Activated B cell treated with CpG ODN at 0.5 μM for 24 hours (primary cell): ENCODE measurements at regions of chr3 and their contacts with region 1.

Region 1: DNA sequence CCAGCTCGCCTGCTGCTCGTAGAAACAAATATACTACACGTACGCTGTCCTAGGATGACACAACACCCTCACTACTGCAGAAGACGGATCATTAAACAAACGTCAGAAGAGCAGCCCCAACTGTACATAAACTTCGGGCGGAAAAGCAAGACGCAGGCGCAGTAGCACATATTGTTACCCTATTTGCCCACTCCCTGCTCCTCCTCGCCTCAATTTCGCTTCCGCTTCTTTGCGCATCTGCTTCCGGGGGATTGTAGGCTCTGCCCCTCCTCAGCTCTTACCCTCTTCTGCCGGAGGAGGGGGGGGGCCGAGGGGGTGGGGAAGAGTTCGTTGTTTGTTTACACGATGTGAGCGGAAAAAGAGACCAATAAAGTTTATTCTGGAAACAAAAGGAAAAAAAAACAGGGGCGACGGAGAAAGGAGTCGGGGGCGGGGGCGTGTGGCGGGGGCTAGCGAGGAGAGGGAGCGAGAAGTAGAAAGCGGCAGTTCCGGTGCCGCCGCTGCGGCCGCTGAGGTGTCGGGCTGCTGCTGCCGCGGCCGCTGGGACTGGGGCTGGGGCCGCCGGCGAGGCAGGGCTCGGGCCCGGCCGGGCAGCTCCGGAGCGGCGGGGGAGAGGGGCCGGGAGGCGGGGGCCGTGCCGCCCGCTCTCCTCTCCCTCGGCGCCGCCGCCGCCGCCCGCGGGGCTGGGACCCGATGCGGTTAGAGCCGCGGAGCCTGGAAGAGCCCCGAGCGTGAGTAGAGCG is at the start of gene PIK3CA:
- DNase-seq: peak; percentile 78
- ATAC-seq: peak; percentile 74
- H3K4me3 Mint-ChIP-seq: peak within 1 kb of the TSS; percentile 94
- H3K27ac Mint-ChIP-seq: peak within 1 kb of the TSS; percentile 95
- H3K4me1 Mint-ChIP-seq: peaks cover 37% of the 10 kb centered on the region
- H3K27me3 Mint-ChIP-seq: no peaks in the 10 kb centered on the region
- CTCF ChIP-seq: no peak
- total RNA-seq, gene PIK3CA: 32.6 and 40.5 TPM in 2 replicates

Region 2: GRCh38 chr3:179015551-179016020 is 132.5 kb before region 1 on chr3:
- CTCF ChIA-PET with region 1: interaction called, 12 read pairs
- POLR2A ChIA-PET with region 1: interaction called, 4 read pairs
- intact Hi-C with region 1: loop called (anchors 1 kb)
- DNase-seq: no peak
- ATAC-seq: peak; percentile 74
- H3K4me3 Mint-ChIP-seq: peak overlapping the region; percentile 15
- H3K27ac Mint-ChIP-seq: peak overlapping the region; percentile 57
- H3K4me1 Mint-ChIP-seq: peaks cover 59% of the 10 kb centered on the region
- H3K27me3 Mint-ChIP-seq: no peaks in the 10 kb centered on the region
- CTCF ChIP-seq: peak; percentile 88

Region 3: DNA sequence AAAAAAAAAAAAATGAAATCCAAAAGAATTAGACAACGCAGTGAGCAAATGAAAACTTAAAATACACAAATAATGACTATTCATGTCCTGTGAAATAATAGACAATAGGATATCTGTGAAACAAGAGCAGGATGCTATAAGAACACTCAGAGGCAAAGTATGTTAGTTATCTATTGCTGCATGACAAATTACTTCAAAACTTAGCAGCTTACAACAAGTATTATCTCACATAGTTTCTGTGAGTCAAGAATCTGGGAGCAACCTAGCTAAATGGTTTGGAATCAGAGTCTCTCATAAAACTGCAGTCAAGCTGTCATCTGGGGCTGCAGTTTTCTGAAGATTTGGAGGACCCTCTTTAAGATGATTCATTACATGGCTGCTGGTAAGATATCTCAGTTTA is 40.0 kb before region 1 on chr3:
- CTCF ChIA-PET with region 1: interaction called, 3 read pairs
- POLR2A ChIA-PET with region 1: interaction called, 3 read pairs
- intact Hi-C with region 1: loop called (anchors 1 kb)
- DNase-seq: no peak
- ATAC-seq: no peak
- H3K4me3 Mint-ChIP-seq: no peak overlapping the region
- H3K27ac Mint-ChIP-seq: no peak overlapping the region
- H3K4me1 Mint-ChIP-seq: no peaks in the 10 kb centered on the region
- H3K27me3 Mint-ChIP-seq: peaks cover 13% of the 10 kb centered on the region
- CTCF ChIP-seq: no peak

Region 4: DNA sequence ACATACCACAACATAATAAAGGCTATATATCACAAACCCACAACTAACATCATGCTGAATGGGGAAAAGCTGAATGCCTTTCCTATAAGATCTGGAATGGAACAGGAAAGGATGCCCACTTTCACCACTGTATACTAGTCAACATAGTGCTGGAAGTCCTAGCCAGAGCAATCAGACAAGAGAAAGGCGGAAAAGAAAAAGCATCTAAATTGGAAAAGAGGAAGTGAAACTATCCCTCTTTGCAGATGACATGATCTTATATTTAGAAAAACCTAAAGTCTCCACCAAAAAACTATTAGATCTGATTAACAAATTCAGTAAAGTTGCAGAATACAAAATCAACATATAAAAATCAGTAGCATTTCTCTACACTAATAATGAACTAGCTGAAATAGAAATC is 14.5 kb before region 1 on chr3:
- CTCF ChIA-PET with region 1: no interaction called
- POLR2A ChIA-PET with region 1: no interaction called
- intact Hi-C with region 1: no loop called
- DNase-seq: no peak
- ATAC-seq: no peak
- H3K4me3 Mint-ChIP-seq: no peak overlapping the region
- H3K27ac Mint-ChIP-seq: no peak overlapping the region
- H3K4me1 Mint-ChIP-seq: peaks cover 10% of the 10 kb centered on the region
- H3K27me3 Mint-ChIP-seq: no peaks in the 10 kb centered on the region
- CTCF ChIP-seq: no peak

Region 5: GRCh38 chr3:179181021-179181472 is 33.0 kb after region 1 on chr3:
- CTCF ChIA-PET with region 1: interaction called, 3 read pairs
- POLR2A ChIA-PET with region 1: interaction called, 48 read pairs
- intact Hi-C with region 1: loop called (anchors 1 kb)
- DNase-seq: no peak
- ATAC-seq: peak; percentile 58
- H3K4me3 Mint-ChIP-seq: no peak overlapping the region
- H3K27ac Mint-ChIP-seq: no peak overlapping the region
- H3K4me1 Mint-ChIP-seq: peaks cover 42% of the 10 kb centered on the region
- H3K27me3 Mint-ChIP-seq: no peaks in the 10 kb centered on the region
- CTCF ChIP-seq: no peak

Region 6: DNA sequence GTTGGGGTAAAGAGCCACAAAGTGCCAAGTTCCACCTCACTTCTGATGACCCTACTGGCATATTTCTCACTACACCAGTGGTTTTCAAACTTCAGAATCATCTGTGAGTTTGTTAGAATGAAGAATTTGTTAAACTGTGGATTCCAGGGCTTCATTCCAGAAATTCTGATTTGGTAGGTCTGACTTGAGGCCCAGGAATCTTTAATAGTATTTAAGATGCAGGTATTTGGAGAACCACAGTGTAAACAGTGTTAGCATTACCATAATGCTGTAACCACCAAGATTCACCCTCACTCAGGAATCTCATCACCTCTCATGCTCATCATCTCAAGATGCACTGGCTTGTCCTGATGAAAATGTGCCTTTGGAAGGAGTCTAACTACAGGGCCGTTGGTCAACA is 96.8 kb after region 1 on chr3:
- CTCF ChIA-PET with region 1: no interaction called
- POLR2A ChIA-PET with region 1: no interaction called
- intact Hi-C with region 1: no loop called
- DNase-seq: no peak
- ATAC-seq: no peak
- H3K4me3 Mint-ChIP-seq: no peak overlapping the region
- H3K27ac Mint-ChIP-seq: no peak overlapping the region
- H3K4me1 Mint-ChIP-seq: no peaks in the 10 kb centered on the region
- H3K27me3 Mint-ChIP-seq: no peaks in the 10 kb centered on the region
- CTCF ChIP-seq: no peak

Region 7: GRCh38 chr3:179266701-179267211 is 118.7 kb after region 1 on chr3:
- CTCF ChIA-PET with region 1: interaction called, 3 read pairs
- POLR2A ChIA-PET with region 1: interaction called, 27 read pairs
- intact Hi-C with region 1: loop called (anchors 1 kb)
- DNase-seq: peak; percentile 34
- ATAC-seq: peak; percentile 69
- H3K4me3 Mint-ChIP-seq: peak overlapping the region; percentile 77
- H3K27ac Mint-ChIP-seq: peak overlapping the region; percentile 82
- H3K4me1 Mint-ChIP-seq: peaks cover 57% of the 10 kb centered on the region
- H3K27me3 Mint-ChIP-seq: no peaks in the 10 kb centered on the region
- CTCF ChIP-seq: no peak

Region 8: DNA sequence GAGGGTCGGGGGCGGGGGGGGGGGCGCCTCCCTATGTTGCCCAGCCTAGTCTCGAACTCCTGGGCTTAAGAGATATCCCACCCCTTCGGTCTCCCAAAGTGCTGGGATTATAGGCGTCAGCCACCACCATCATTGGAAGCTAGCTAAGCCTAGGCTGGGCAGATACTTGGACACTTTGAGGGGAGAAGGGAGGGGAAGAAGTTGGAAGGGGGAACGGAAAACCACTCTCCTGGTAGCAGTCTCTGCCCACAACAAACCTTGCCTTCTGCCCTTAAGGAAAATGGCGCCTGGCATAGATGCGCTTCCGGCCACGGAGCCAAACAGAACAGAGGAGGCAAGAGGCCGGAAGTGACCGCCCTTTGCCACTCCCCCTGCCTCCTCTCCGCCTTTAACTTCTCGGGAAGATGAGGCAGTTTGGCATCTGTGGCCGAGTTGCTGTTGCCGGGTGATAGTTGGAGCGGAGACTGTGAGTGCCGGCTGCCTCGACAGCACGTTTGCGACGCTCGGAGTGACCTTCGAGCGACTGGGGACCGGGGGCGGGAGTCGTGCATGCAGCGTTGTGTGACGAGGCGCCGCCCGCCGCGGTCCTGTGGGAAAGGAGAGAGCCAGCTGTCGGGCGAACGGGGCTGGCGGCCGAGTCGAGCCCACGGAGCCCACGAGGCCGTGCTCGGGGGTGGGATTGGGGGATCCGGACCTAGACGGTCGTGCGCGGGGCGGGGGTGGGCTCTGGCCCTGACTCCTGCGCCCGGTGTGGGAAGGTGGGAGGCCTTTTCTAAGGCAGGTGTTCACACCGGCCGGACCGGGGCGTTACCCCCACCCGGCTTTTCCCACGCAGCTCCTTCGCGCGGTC is 199.5 kb after region 1 on chr3 and contains the start of gene MFN1:
- CTCF ChIA-PET with region 1: no interaction called
- POLR2A ChIA-PET with region 1: interaction called, 11 read pairs
- intact Hi-C with region 1: loop called (anchors 1 kb)
- DNase-seq: peak; percentile 80
- ATAC-seq: peak; percentile 88
- H3K4me3 Mint-ChIP-seq: peak within 1 kb of the TSS; percentile 98
- H3K27ac Mint-ChIP-seq: peak within 1 kb of the TSS; percentile 95
- H3K4me1 Mint-ChIP-seq: peaks cover 35% of the 10 kb centered on the region
- H3K27me3 Mint-ChIP-seq: no peaks in the 10 kb centered on the region
- CTCF ChIP-seq: no peak
- total RNA-seq, gene MFN1: 64.9 and 65.3 TPM in 2 replicates

Region 9: GRCh38 chr3:179604321-179605078 is 456.5 kb after region 1 on chr3 and contains the starts of genes MRPL47 and NDUFB5:
- CTCF ChIA-PET with region 1: no interaction called
- POLR2A ChIA-PET with region 1: no interaction called
- intact Hi-C with region 1: loop called (anchors 1 kb)
- DNase-seq: peak; percentile 82
- ATAC-seq: peak; percentile 96
- H3K4me3 Mint-ChIP-seq: peak within 1 kb of the TSS; percentile 99
- H3K27ac Mint-ChIP-seq: peak within 1 kb of the TSS; percentile 99
- H3K4me1 Mint-ChIP-seq: peaks cover 51% of the 10 kb centered on the region
- H3K27me3 Mint-ChIP-seq: no peaks in the 10 kb centered on the region
- CTCF ChIP-seq: no peak
- total RNA-seq, gene MRPL47: 38.6 and 44.3 TPM in 2 replicates
- total RNA-seq, gene NDUFB5: 63.5 and 67.3 TPM in 2 replicates